B cell (primary cell): ENCODE measurements at regions of chr1 and their contacts with region 1.

Region 1: DNA sequence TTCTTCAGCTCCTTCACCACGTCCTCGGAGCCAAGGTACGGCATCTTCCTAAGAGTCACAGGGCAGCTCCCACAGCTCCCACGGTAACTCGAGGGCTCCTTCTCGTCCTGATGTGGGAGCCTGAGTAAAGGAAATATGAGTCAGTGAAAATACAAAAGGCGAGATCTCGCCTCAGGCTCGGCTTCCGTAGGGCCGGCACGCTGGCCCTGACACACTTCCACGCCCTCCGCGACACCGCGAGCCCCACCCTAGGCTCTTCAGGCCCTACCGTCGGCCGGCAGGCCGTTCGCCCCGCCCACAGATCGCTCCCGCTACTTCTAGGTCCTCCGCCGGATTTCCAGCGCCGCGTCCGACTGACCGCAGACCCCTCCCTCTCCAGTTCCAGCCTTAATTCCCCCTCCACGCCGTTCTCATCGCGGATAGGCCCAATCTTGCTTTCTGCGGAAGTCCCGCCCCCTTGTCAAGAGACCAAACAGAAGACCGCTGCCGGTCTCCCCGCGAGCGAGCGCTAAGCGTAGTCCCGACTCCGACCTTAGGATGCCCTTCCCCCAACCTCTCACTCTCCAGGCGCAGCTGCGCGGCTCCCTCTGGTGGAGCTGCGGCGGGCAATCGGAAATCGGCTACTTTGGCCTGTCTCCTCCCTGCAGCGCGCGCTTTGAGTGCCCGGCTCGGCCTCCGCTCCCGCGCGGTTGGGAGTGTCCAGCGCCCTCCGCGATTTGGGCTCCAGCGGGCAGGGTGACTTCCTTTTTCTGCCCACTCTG is at the starts of genes AP4B1 and DCLRE1B:
- DNase-seq: peak; percentile 99
- ATAC-seq: peak; percentile 90
- H3K4me3 ChIP-seq: peak within 1 kb of the TSS; percentile 87 to 98 (median 92)
- H3K4me3 Mint-ChIP-seq: peak within 1 kb of the TSS; percentile 92
- H3K27ac ChIP-seq: peak within 1 kb of the TSS; percentile 87 to 93
- H3K27ac Mint-ChIP-seq: peak within 1 kb of the TSS; percentile 99
- H3K4me1 ChIP-seq: peaks cover 32 to 39% of the 10 kb centered on the region in 2 donors
- H3K4me1 Mint-ChIP-seq: peaks cover 43% of the 10 kb centered on the region
- H3K27me3 ChIP-seq: no peaks in the 10 kb centered on the region
- H3K27me3 Mint-ChIP-seq: no peaks in the 10 kb centered on the region
- CTCF ChIP-seq: peak; percentile 71
- total RNA-seq, gene AP4B1: 51.5 and 52.2 TPM in 2 replicates
- total RNA-seq, gene DCLRE1B: 4.3 and 4.8 TPM in 2 replicates

Region 2: GRCh38 chr1:113207019-113207418 is 697.8 kb before region 1 on chr1:
- CTCF ChIA-PET with region 1: no interaction called
- POLR2A ChIA-PET with region 1: no interaction called
- intact Hi-C with region 1: no loop called
- DNase-seq: no peak
- ATAC-seq: no peak
- H3K4me3 ChIP-seq: no peak overlapping the region
- H3K4me3 Mint-ChIP-seq: no peak overlapping the region
- H3K27ac ChIP-seq: no peak overlapping the region
- H3K27ac Mint-ChIP-seq: no peak overlapping the region
- H3K4me1 ChIP-seq: no peaks in the 10 kb centered on the region
- H3K4me1 Mint-ChIP-seq: peaks cover 2% of the 10 kb centered on the region
- H3K27me3 ChIP-seq: peaks cover 0 to 8% (median 0%) of the 10 kb centered on the region in 4 experiments
- H3K27me3 Mint-ChIP-seq: peaks cover 51% of the 10 kb centered on the region
- CTCF ChIP-seq: no peak

Region 3: DNA sequence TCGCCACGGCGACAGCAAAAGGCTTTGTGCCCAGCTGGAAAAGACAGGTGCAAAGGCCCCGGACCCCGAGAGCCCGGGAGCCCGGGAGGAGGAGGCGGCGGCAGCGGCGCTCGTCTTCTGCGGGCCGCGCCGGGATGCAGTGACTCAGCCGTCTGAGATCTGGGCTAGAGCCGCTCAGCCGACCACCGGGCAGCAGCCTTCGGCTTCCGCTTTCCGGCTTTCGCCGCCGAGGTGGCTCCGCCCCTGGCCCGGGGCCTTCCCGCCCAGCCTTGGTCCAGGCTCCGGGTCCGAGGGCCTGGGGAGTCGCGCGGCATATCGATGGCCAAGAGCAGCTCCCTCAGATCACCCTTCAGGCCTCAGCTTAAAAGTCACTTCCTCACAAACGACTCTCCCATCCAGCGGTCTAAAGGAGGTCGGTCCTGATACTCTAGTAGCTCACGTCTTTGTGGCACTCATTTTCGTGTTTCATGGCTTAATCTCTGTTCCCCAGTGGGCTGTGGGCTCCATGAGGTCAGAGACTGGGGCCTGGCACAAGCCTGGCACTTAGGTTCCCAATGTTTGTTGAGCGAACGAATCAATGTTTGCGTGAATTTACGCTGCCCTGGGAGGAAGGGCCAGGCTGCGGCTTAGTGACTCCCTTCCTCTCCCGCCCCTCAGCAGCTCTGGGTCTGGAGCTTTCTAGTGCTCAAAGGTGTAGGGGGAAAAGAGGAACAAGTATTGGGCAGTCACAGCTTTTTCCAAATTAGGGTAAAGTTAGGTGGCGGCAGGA is 145.3 kb before region 1 on chr1 and contains the start of gene PHTF1:
- CTCF ChIA-PET with region 1: interaction called, 3 read pairs
- POLR2A ChIA-PET with region 1: interaction called, 3 read pairs
- intact Hi-C with region 1: loop called (anchors 1 kb)
- DNase-seq: peak; percentile 80
- ATAC-seq: peak; percentile 84
- H3K4me3 ChIP-seq: peak within 1 kb of the TSS; percentile 76 to 93 (median 92)
- H3K4me3 Mint-ChIP-seq: peak within 1 kb of the TSS; percentile 99
- H3K27ac ChIP-seq: peak within 1 kb of the TSS; percentile 86 to 90
- H3K27ac Mint-ChIP-seq: peak within 1 kb of the TSS; percentile 99
- H3K4me1 ChIP-seq: peaks cover 6 to 20% of the 10 kb centered on the region in 2 donors
- H3K4me1 Mint-ChIP-seq: peaks cover 23% of the 10 kb centered on the region
- H3K27me3 ChIP-seq: no peaks in the 10 kb centered on the region
- H3K27me3 Mint-ChIP-seq: no peaks in the 10 kb centered on the region
- CTCF ChIP-seq: no peak
- total RNA-seq, gene PHTF1: 18.5 and 25.7 TPM in 2 replicates

Region 4: GRCh38 chr1:113859478-113860175 is 45.2 kb before region 1 on chr1:
- CTCF ChIA-PET with region 1: interaction called, 16 read pairs
- POLR2A ChIA-PET with region 1: interaction called, 4 read pairs
- intact Hi-C with region 1: loop called (anchors 1 kb)
- DNase-seq: peak; percentile 79
- ATAC-seq: peak; percentile 80
- H3K4me3 ChIP-seq: peak overlapping the region; percentile 5 to 58 (median 31)
- H3K4me3 Mint-ChIP-seq: peak overlapping the region; percentile 72
- H3K27ac ChIP-seq: peak overlapping the region; percentile 73 to 80
- H3K27ac Mint-ChIP-seq: peak overlapping the region; percentile 92
- H3K4me1 ChIP-seq: peaks cover 58 to 60% of the 10 kb centered on the region in 2 donors
- H3K4me1 Mint-ChIP-seq: peaks cover 58% of the 10 kb centered on the region
- H3K27me3 ChIP-seq: no peaks in the 10 kb centered on the region
- H3K27me3 Mint-ChIP-seq: no peaks in the 10 kb centered on the region
- CTCF ChIP-seq: no peak

Region 5: DNA sequence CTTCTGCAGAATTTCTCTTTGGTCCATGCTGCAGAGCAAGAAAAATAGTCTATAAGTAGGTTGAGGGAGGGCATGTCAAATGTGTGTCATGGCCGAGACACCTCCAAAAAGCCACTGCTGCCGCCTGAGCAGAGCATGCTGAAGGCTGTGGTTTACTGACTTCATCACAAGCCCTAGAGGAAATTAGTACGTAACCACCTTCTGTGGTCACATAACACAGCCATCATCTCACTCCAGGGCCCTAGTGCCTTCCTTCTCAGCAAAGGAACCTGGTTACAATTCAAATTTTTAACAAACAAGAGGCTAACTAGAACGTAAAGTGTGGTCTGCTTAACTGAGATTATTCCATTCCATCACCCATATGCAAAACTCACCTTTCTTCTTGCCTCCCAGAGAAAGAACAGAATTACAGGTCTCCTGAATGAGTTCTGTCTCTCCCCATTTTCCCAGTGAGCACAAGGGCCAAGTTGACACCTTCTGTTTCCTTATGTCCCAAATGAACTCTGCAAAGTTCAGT is 33.2 kb before region 1 on chr1 and contains the start of gene PTPN22:
- CTCF ChIA-PET with region 1: interaction called, 16 read pairs
- POLR2A ChIA-PET with region 1: no interaction called
- intact Hi-C with region 1: loop called (anchors 1 kb)
- DNase-seq: peak; percentile 88
- ATAC-seq: peak; percentile 93
- H3K4me3 ChIP-seq: peak within 1 kb of the TSS; percentile 52 to 72 (median 66)
- H3K4me3 Mint-ChIP-seq: peak within 1 kb of the TSS; percentile 92
- H3K27ac ChIP-seq: peak within 1 kb of the TSS; percentile 84 to 91
- H3K27ac Mint-ChIP-seq: peak within 1 kb of the TSS; percentile 96
- H3K4me1 ChIP-seq: peaks cover 50 to 52% of the 10 kb centered on the region in 2 donors
- H3K4me1 Mint-ChIP-seq: peaks cover 67% of the 10 kb centered on the region
- H3K27me3 ChIP-seq: no peaks in the 10 kb centered on the region
- H3K27me3 Mint-ChIP-seq: no peaks in the 10 kb centered on the region
- CTCF ChIP-seq: no peak
- total RNA-seq, gene PTPN22: 34.4 and 37.4 TPM in 2 replicates

Region 6: GRCh38 chr1:113928941-113929749 is 24.3 kb after region 1 on chr1 and contains the start of gene HIPK1:
- CTCF ChIA-PET with region 1: interaction called, 94 read pairs
- POLR2A ChIA-PET with region 1: interaction called, 50 read pairs
- intact Hi-C with region 1: loop called (anchors 1 kb)
- DNase-seq: peak; percentile 96
- ATAC-seq: peak; percentile 75
- H3K4me3 ChIP-seq: peak within 1 kb of the TSS; percentile 76 to 92 (median 86)
- H3K4me3 Mint-ChIP-seq: peak within 1 kb of the TSS; percentile 100
- H3K27ac ChIP-seq: peak within 1 kb of the TSS; percentile 98 to 99
- H3K27ac Mint-ChIP-seq: peak within 1 kb of the TSS; percentile 100
- H3K4me1 ChIP-seq: peaks cover 33 to 35% of the 10 kb centered on the region in 2 donors
- H3K4me1 Mint-ChIP-seq: peaks cover 49% of the 10 kb centered on the region
- H3K27me3 ChIP-seq: no peaks in the 10 kb centered on the region
- H3K27me3 Mint-ChIP-seq: no peaks in the 10 kb centered on the region
- CTCF ChIP-seq: no peak
- total RNA-seq, gene HIPK1: 48.0 and 48.2 TPM in 2 replicates

Region 7: GRCh38 chr1:113949007-113949406 is 44.2 kb after region 1 on chr1:
- CTCF ChIA-PET with region 1: no interaction called
- POLR2A ChIA-PET with region 1: no interaction called
- intact Hi-C with region 1: loop called (anchors 1 kb)
- DNase-seq: peak; percentile 31
- ATAC-seq: no peak
- H3K4me3 ChIP-seq: no peak overlapping the region
- H3K4me3 Mint-ChIP-seq: no peak overlapping the region
- H3K27ac ChIP-seq: no peak overlapping the region
- H3K27ac Mint-ChIP-seq: no peak overlapping the region
- H3K4me1 ChIP-seq: peaks cover 16 to 25% of the 10 kb centered on the region in 2 donors
- H3K4me1 Mint-ChIP-seq: peaks cover 38% of the 10 kb centered on the region
- H3K27me3 ChIP-seq: no peaks in the 10 kb centered on the region
- H3K27me3 Mint-ChIP-seq: no peaks in the 10 kb centered on the region
- CTCF ChIP-seq: peak; percentile 38

Region 8: GRCh38 chr1:114164840-114165553 is 260.1 kb after region 1 on chr1:
- CTCF ChIA-PET with region 1: no interaction called
- POLR2A ChIA-PET with region 1: no interaction called
- intact Hi-C with region 1: no loop called
- DNase-seq: no peak
- ATAC-seq: no peak
- H3K4me3 ChIP-seq: no peak overlapping the region
- H3K4me3 Mint-ChIP-seq: no peak overlapping the region
- H3K27ac ChIP-seq: no peak overlapping the region
- H3K27ac Mint-ChIP-seq: no peak overlapping the region
- H3K4me1 ChIP-seq: no peaks in the 10 kb centered on the region
- H3K4me1 Mint-ChIP-seq: no peaks in the 10 kb centered on the region
- H3K27me3 ChIP-seq: peaks cover 0 to 2% (median 0%) of the 10 kb centered on the region in 4 experiments
- H3K27me3 Mint-ChIP-seq: peaks cover 33% of the 10 kb centered on the region
- CTCF ChIP-seq: no peak